ENCODE measurements at regions of chr17 and their contacts with region 1.

Region 1: GRCh38 chr17:39174907-39175694 is 9.1 kb upstream of the ARL5C start:
- DNase-seq: peak; percentile 88 to 89 (median 89)
- ATAC-seq: peak; percentile 95
- H3K4me3 ChIP-seq: no peak overlapping the region
- H3K27ac ChIP-seq: peak overlapping the region; percentile 41; the same call in 1 of the 3 replicates
- H3K4me1 ChIP-seq: peaks cover 7 to 33% of the 10 kb centered on the region in 2 experiments
- H3K27me3 ChIP-seq: no peaks in the 10 kb centered on the region
- CTCF ChIP-seq: peak; percentile 83 to 90 (median 86)
- EP300 ChIP-seq: no peak
- POLR2A ChIP-seq: no peak
- RAD21 ChIP-seq: peak; percentile 43 to 67

Region 2: GRCh38 chr17:39164675-39165143 is 10.4 kb before region 1 on chr17:
- CTCF ChIA-PET with region 1: no interaction called
- POLR2A ChIA-PET with region 1: interaction called, 14 read pairs
- in situ Hi-C with region 1: no loop called
- intact Hi-C with region 1: no loop called
- DNase-seq: peak; percentile 74 to 91 (median 86)
- ATAC-seq: peak; percentile 94
- H3K4me3 ChIP-seq: no peak overlapping the region
- H3K27ac ChIP-seq: no peak overlapping the region
- H3K4me1 ChIP-seq: peaks cover 5 to 19% of the 10 kb centered on the region in 2 experiments; a peak in 3 of 5 replicates
- H3K27me3 ChIP-seq: peaks cover 0 to 7% of the 10 kb centered on the region in 2 experiments; a peak in 2 of 5 replicates
- CTCF ChIP-seq: peak; percentile 82 to 92 (median 83)
- EP300 ChIP-seq: no peak
- POLR2A ChIP-seq: no peak
- RAD21 ChIP-seq: peak; percentile 32 to 54; a peak in 3 of 4 replicates

Region 3: DNA sequence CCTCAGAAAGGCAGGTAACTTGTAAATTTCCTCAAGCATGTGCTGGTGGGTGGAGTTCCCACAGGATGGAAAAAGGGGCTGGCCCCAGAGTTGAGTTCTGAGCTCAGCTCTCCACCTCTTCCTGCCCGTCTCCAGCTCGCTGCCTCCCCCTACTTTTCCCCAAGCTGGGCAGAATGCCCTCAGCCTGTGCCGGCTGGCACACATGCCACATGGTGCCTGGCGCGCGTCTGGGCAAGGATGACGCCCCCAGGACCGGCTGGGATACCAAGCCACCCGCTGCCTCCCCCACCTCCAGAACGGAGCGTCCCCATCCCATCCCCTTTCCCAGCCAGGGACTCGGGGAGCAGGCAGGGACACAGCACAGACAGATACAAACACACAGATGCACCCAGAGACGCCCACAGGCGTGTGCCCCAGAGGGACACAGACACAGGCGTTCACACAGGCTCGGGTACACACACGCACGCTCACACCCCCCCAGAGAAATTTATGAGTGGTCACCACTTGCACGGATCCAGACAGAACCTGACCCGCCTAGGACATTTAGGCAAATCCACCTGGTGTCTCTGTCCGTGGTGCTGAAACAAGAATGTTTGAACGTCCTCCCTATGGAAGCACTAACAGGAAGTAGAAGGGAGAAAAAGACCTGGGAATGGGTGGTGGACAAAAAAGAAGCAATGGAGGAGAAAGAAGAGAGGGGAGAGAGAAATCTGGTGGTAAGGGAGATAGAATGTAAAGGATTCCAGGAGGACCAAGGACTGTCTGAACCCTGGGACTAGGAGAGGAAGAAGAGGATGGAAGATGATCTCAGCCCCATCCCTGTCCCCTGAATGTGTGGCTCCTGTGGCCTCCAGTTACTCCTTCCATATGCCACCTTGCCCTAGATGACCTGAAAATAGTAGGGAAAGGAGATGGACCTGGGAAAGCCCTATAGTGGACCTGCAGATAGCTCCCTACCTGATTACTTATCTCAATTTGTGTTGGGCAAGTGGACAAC is 417.2 kb after region 1 on chr17:
- CTCF ChIA-PET with region 1: no interaction called
- POLR2A ChIA-PET with region 1: no interaction called
- in situ Hi-C with region 1: no loop called
- intact Hi-C with region 1: no loop called
- DNase-seq: peak; percentile 59 to 75 (median 62)
- ATAC-seq: peak; percentile 70
- H3K4me3 ChIP-seq: no peak overlapping the region
- H3K27ac ChIP-seq: no peak overlapping the region
- H3K4me1 ChIP-seq: peaks cover 0 to 7% of the 10 kb centered on the region in 2 experiments; a peak in 1 of 5 replicates
- H3K27me3 ChIP-seq: peaks cover 9 to 30% of the 10 kb centered on the region in 2 experiments
- CTCF ChIP-seq: no peak
- EP300 ChIP-seq: no peak
- POLR2A ChIP-seq: no peak
- RAD21 ChIP-seq: no peak

Measured in K562 (cell line).